Body of pancreas (tissue), 4 donors: ENCODE measurements at regions of chr6 and their contacts with region 1.

Region 1: DNA sequence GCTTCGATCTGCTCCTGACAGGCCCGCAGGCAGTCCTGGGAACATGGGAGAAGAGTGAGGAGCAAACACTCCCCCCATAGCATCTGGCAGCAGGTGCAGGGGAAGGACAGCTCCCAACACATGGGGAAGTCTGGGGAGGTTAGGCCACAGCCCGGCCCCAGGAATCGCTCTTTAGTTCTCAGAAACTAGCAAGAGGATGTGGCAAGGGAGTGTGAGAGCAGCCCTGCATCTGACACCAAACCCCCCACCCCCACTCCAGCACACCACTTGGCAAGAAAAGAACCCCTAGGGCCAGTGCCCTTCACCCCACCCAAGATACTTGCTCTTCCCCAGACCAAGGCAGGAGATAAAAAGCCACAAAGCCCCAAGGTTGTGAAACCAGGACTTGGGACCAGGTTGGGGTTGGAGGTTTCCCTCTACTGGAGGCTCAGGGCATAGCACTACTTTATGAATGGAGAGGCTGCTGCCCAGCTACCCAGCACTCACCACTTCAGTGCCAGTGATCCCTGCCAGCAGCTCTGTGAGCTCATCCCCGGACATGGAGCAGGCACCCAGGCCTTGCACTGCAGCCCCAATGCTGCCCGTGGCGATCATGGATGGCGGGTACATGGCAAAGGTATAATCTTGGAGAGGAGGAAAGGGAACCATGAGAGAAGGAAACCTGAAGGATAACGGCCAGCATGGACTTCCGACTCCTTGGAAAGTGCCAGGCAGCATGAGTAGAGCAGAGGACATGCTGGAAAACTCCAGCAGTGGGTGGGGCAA is 5.4 kb downstream of the CCND3 start:
- DNase-seq: peak; percentile 75 to 83 (median 76)
- ATAC-seq: peak; percentile 83
- H3K4me3 ChIP-seq: no peak overlapping the region
- H3K27ac ChIP-seq: peak overlapping the region in 1 of 4 donors; percentile 50
- H3K4me1 ChIP-seq: peaks cover 38% of the 10 kb centered on the region
- H3K27me3 ChIP-seq: no peaks in the 10 kb centered on the region
- CTCF ChIP-seq: peak; percentile 72 to 85 (median 78)
- POLR2A ChIP-seq: no peak

Region 2: DNA sequence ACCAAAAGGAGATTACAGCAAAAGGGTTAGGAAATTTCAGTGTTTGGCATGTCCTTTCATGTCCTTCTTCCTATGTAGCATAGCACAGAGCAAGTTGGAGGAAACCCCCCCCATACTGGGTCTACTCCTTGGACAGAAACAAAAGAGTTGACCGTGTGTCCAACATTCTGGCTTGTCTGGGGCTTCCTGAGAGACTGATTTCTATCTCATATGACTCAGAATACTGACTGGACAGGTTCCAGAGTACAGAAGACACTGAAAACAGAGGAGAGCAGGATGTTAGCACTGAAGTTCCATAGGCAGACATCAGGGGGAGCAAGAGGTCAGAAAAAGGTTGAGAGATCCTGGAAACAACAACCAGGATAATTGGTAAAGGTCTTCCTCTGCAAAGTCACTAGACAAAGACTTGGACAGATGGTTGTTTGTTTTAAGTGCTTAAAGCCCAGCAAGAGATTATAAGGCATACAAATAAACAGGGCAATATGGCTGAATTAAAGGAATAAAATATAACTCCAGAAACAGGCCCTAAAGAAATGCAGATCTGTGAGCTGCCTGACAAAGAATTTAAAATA is 89.5 kb before region 1 on chr6:
- intact Hi-C with region 1: loop called (anchors 10 kb)
- DNase-seq: peak; percentile 69 to 76 (median 72)
- ATAC-seq: peak; percentile 87
- H3K4me3 ChIP-seq: no peak overlapping the region
- H3K27ac ChIP-seq: peak overlapping the region in 2 of 4 donors; percentile 11 to 29
- H3K4me1 ChIP-seq: peaks cover 10% of the 10 kb centered on the region
- H3K27me3 ChIP-seq: no peaks in the 10 kb centered on the region
- CTCF ChIP-seq: peak; percentile 41 to 90 (median 84)
- POLR2A ChIP-seq: no peak

Region 3: DNA sequence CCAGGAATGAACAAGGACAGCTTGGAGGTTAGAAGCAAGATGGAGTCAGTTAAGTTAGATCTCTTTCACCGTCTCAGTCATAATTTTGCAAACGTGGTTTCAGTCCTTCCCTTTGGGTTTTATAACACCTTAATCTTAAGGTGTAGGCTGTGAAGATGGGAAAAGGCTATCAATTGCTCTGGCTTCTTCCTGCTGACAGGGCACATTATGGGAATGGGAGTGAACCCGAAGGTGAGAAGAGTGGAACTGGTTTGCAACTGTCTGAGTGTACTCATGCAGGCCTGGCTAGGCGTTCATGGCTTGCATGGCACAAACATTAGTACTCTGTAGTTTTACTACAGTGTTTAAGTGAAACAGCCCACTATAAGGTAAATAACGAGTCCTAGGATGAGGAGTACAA is 123.5 kb after region 1 on chr6:
- intact Hi-C with region 1: no loop called
- DNase-seq: no peak
- ATAC-seq: no peak
- H3K4me3 ChIP-seq: no peak overlapping the region
- H3K27ac ChIP-seq: no peak overlapping the region
- H3K4me1 ChIP-seq: no peaks in the 10 kb centered on the region
- H3K27me3 ChIP-seq: no peaks in the 10 kb centered on the region
- CTCF ChIP-seq: no peak
- POLR2A ChIP-seq: no peak

Region 4: GRCh38 chr6:42402184-42402583 is 465.9 kb after region 1 on chr6:
- intact Hi-C with region 1: no loop called
- DNase-seq: no peak
- ATAC-seq: no peak
- H3K4me3 ChIP-seq: no peak overlapping the region
- H3K27ac ChIP-seq: no peak overlapping the region
- H3K4me1 ChIP-seq: no peaks in the 10 kb centered on the region
- H3K27me3 ChIP-seq: no peaks in the 10 kb centered on the region
- CTCF ChIP-seq: no peak
- POLR2A ChIP-seq: no peak